Activated CD4-positive, alpha-beta T cell treated with anti-CD3 and anti-CD28 coated beads, Interleukin-2, amount 10 ng/mL, durations not matched to agents 24 days and 14 days (primary cell): ENCODE measurements at regions of chr19 and their contacts with region 1.

Region 1: DNA sequence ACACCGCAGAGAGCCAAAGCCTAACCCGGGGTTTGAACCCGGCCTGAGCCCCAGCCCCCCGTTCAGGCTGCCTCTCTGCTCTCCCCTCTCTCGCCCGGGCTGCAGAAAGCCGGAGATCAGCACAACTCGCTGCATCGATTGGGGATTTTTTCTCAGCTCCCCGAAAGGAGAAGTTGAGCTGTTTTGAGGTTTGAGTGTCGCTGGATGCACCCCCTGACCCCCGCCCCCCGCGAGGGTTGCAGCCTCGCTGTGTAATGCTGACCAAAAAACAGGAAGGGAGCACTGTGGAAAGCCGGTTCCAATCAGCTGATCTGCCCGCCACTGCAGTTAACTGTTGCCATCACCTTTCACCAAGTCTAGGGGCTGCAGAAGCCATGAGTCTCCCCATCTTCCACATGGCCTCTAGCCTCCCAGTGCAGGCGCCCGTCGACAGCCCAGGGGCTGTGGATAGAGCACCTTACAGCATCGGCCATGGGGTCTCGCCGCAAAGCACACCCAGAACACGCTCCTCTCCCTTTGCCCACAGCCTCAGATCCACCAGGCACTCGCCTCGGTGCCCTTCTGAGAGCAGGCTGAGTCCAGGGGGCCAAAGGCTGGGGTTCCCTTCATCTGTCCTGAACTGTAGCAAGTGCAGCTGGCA is 34.5 kb downstream of the MYO9B start:
- DNase-seq: peak; percentile 61
- H3K4me3 Mint-ChIP-seq: peak overlapping the region; percentile 42
- H3K27ac Mint-ChIP-seq: peak overlapping the region; percentile 49
- H3K4me1 Mint-ChIP-seq: peaks cover 30% of the 10 kb centered on the region
- H3K27me3 Mint-ChIP-seq: no peaks in the 10 kb centered on the region

Region 2: GRCh38 chr19:17125715-17126677 is 15.9 kb after region 1 on chr19:
- intact Hi-C with region 1: loop called (anchors 2 kb)
- DNase-seq: peak; percentile 94
- H3K4me3 Mint-ChIP-seq: peak overlapping the region; percentile 87
- H3K27ac Mint-ChIP-seq: peak overlapping the region; percentile 99
- H3K4me1 Mint-ChIP-seq: peaks cover 46% of the 10 kb centered on the region
- H3K27me3 Mint-ChIP-seq: no peaks in the 10 kb centered on the region